Activated naive CD4-positive, alpha-beta T cell treated with anti-CD3 and anti-CD28 coated beads for 36 hours (primary cell): ENCODE measurements at regions of chr3 and their contacts with region 1.

Region 1: DNA sequence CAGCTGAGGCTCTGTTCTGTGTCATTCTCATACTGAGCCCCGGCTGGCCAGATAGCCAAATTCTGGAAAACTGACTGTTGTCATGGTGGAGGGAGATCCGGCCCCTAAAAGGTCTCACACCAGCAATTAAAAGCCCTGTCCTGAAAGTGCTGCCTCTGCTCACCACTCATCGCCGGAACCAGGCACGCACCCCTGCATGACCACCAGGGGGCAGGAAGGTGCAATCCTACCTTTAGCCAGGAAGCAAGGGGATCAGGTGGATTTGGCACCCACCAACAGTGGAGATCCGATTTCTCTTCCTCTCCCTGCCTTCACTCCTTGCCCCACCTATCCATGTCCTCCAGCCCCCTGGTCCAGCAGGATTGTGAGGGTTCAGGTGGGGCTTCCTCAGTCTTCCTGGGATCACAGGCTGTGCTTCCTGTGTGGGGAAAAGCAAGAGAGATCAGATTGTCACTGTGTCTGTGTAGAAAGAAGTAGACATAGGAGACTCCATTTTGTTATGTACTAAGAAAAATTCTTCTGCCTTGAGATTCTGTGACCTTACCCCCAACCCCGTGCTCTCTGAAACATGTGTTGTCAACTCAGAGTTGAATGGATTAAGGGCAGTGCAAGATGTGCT is 16.1 kb upstream of the CACNA2D2 start:
- DNase-seq: peak; percentile 86
- H3K4me3 Mint-ChIP-seq: no peak overlapping the region
- H3K27ac Mint-ChIP-seq: no peak overlapping the region
- H3K4me1 Mint-ChIP-seq: peaks cover 7% of the 10 kb centered on the region
- H3K27me3 Mint-ChIP-seq: no peaks in the 10 kb centered on the region

Region 2: GRCh38 chr3:49701388-49702077 is 818.0 kb before region 1 on chr3:
- CTCF ChIA-PET with region 1: no interaction called
- intact Hi-C with region 1: no loop called
- DNase-seq: peak; percentile 26
- H3K4me3 Mint-ChIP-seq: no peak overlapping the region
- H3K27ac Mint-ChIP-seq: no peak overlapping the region
- H3K4me1 Mint-ChIP-seq: no peaks in the 10 kb centered on the region
- H3K27me3 Mint-ChIP-seq: no peaks in the 10 kb centered on the region

Region 3: DNA sequence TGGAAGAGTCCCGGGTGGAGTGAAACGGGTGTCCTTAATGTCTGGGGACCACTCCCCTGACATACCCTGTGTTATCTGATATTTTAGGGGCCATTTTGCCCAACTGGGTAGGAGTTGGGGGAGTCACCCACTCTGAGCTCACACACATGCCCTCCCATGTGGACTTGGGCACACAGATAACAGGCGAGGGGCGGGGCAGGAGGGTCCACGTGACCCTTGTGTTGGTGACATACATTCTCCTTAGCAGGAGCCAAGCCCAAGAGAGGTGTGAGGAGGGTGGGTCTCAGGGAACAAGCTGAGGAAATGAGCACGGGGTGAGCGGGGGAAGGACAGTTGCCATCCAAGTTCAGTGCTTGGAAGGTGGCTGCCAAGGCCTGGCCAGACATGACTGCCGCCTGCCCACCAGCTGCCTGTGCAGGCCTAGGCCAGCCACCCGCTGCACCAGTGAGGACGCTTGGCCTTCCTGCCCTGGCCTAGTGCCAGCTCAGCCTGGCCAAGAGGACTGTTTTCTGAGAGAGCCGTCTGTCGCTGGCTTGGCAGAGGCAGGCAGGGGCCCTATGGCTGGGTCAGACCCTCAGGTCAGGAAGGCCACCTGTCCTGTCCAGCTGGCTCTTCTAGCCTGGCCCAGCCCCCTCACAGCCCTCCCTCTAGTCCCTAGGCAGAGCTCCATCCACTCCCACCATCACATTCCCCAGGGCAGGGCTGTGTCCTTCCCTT is 128.9 kb before region 1 on chr3:
- CTCF ChIA-PET with region 1: no interaction called
- intact Hi-C with region 1: no loop called
- DNase-seq: no peak
- H3K4me3 Mint-ChIP-seq: no peak overlapping the region
- H3K27ac Mint-ChIP-seq: no peak overlapping the region
- H3K4me1 Mint-ChIP-seq: no peaks in the 10 kb centered on the region
- H3K27me3 Mint-ChIP-seq: no peaks in the 10 kb centered on the region

Region 4: DNA sequence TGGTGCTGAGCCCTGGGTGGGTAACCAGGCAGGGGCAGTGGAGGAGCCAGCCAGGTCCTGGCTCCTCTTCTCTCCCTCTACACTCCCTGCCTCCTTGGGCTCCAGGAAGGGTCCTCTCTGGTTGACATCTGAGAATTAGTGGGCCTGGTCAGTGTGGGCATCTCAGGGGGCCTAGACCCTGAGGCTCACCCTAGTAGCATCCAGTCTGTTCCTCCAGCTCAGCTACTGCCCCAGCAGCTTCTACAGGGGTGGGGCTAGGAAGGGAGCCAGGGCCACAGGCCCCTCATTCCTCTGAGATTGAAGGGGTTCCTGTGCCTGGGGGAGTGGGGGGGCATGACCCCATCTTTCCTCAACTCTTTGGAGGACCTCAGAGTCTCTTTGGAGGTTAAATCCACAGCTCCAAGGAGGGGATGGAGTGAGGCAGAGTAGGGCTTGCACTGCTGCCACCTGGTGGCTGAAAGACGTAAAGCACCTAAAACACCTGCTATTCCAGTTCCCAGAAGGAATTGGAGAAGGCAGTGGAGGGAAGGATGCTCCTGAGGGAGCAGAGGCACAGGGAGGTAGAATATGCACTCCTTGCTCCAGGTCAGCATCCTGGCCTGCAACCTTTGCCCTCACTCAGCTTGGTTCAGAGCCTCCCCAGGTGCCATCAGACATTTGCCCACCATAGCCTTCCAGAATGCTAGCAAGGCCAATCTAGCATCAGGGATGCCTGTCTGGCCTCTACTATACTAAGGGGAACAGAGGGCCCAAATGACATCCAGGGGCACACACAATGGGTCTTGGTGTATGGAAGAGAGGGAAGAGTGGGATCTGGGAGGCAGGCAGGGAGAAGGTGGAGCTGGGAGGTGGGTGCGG is 22.8 kb after region 1 on chr3:
- CTCF ChIA-PET with region 1: interaction called, 10 read pairs
- intact Hi-C with region 1: loop called (anchors 1 kb)
- DNase-seq: peak; percentile 71
- H3K4me3 Mint-ChIP-seq: no peak overlapping the region
- H3K27ac Mint-ChIP-seq: no peak overlapping the region
- H3K4me1 Mint-ChIP-seq: no peaks in the 10 kb centered on the region
- H3K27me3 Mint-ChIP-seq: no peaks in the 10 kb centered on the region

Region 5: GRCh38 chr3:50550079-50550741 is 30.6 kb after region 1 on chr3:
- CTCF ChIA-PET with region 1: interaction called, 5 read pairs
- intact Hi-C with region 1: loop called (anchors 1 kb)
- DNase-seq: peak; percentile 83
- H3K4me3 Mint-ChIP-seq: no peak overlapping the region
- H3K27ac Mint-ChIP-seq: no peak overlapping the region
- H3K4me1 Mint-ChIP-seq: no peaks in the 10 kb centered on the region
- H3K27me3 Mint-ChIP-seq: no peaks in the 10 kb centered on the region

Region 6: GRCh38 chr3:50983887-50984286 is 464.3 kb after region 1 on chr3:
- CTCF ChIA-PET with region 1: no interaction called
- intact Hi-C with region 1: no loop called
- DNase-seq: no peak
- H3K4me3 Mint-ChIP-seq: no peak overlapping the region
- H3K27ac Mint-ChIP-seq: no peak overlapping the region
- H3K4me1 Mint-ChIP-seq: no peaks in the 10 kb centered on the region
- H3K27me3 Mint-ChIP-seq: no peaks in the 10 kb centered on the region